ENCODE measurements at regions of chr12 and their contacts with region 1.

Region 1: DNA sequence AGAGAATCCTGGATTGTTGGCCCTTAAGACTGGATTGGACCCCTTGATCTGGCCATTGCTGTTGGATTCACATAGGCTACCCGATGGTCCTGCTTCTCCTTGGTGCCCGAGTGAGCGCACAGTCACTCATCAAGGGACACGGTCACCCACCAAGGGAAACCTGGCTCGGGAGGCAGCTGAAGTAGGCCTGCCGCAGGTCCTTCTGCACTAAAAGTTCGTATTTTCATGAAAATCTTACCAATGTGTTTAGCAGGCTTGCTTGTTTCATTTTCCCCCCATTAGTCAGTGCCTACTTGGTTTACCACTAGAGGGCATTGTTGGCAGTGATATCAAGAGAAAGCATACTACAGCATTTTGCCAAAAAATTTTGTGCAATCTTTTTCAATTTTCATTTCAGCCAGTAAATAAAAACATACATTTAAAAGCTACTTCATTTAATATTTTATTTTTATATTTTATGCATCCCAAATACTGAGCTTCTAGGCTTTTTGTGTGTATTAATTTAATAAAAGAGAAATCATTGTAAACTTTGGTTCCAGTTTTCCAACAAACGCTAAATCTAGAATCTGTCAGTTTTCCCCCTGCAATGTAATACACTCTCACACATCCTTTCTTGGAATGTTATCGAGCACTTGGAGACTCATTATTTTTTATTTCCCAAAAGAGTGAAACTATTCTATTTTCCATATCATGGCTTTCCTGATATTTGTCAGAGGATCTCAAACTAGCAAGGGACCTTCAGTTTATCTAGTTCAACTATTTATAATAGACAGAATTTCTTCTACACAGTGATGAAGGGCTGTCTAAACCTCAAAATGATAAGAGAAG is 116.7 kb downstream of the LMNTD1 start:
- DNase-seq: no peak
- ATAC-seq: no peak
- H3K4me3 Mint-ChIP-seq: no peak overlapping the region
- H3K27ac Mint-ChIP-seq: no peak overlapping the region
- H3K4me1 Mint-ChIP-seq: peaks cover 4% of the 10 kb centered on the region
- H3K27me3 Mint-ChIP-seq: no peaks in the 10 kb centered on the region
- CTCF ChIP-seq: peak; percentile 64

Region 2: DNA sequence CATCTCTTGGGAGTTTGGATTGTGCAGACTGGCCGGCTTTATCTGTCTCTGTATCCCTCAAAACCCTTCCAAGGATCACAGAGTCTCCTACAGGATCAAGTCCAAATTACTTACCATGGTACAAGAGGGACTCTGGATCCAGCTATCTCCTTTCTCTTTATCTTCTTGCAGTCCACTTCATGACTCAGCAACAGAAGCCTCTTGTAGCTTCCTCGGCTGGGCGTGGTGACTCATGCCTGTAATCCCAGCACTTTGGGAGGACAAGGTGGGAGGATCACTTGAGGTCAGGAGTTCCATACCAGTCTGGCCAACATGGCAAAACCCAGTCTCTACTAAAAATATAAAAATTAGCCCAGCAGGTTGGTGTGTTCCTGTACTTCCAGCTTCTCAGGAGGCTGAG is 677.3 kb before region 1 on chr12:
- CTCF ChIA-PET with region 1: no interaction called
- POLR2A ChIA-PET with region 1: no interaction called
- intact Hi-C with region 1: no loop called
- DNase-seq: no peak
- ATAC-seq: no peak
- H3K4me3 Mint-ChIP-seq: no peak overlapping the region
- H3K27ac Mint-ChIP-seq: no peak overlapping the region
- H3K4me1 Mint-ChIP-seq: peaks cover 5% of the 10 kb centered on the region
- H3K27me3 Mint-ChIP-seq: no peaks in the 10 kb centered on the region
- CTCF ChIP-seq: no peak

Region 3: GRCh38 chr12:25397001-25397400 is 39.4 kb before region 1 on chr12:
- CTCF ChIA-PET with region 1: no interaction called
- POLR2A ChIA-PET with region 1: no interaction called
- intact Hi-C with region 1: no loop called
- DNase-seq: no peak
- ATAC-seq: no peak
- H3K4me3 Mint-ChIP-seq: no peak overlapping the region
- H3K27ac Mint-ChIP-seq: no peak overlapping the region
- H3K4me1 Mint-ChIP-seq: peaks cover 5% of the 10 kb centered on the region
- H3K27me3 Mint-ChIP-seq: no peaks in the 10 kb centered on the region
- CTCF ChIP-seq: no peak

Region 4: GRCh38 chr12:25775968-25776367 is 339.6 kb after region 1 on chr12:
- CTCF ChIA-PET with region 1: no interaction called
- POLR2A ChIA-PET with region 1: no interaction called
- intact Hi-C with region 1: no loop called
- DNase-seq: no peak
- ATAC-seq: no peak
- H3K4me3 Mint-ChIP-seq: no peak overlapping the region
- H3K27ac Mint-ChIP-seq: no peak overlapping the region
- H3K4me1 Mint-ChIP-seq: no peaks in the 10 kb centered on the region
- H3K27me3 Mint-ChIP-seq: peaks cover 4% of the 10 kb centered on the region
- CTCF ChIP-seq: no peak

Region 5: DNA sequence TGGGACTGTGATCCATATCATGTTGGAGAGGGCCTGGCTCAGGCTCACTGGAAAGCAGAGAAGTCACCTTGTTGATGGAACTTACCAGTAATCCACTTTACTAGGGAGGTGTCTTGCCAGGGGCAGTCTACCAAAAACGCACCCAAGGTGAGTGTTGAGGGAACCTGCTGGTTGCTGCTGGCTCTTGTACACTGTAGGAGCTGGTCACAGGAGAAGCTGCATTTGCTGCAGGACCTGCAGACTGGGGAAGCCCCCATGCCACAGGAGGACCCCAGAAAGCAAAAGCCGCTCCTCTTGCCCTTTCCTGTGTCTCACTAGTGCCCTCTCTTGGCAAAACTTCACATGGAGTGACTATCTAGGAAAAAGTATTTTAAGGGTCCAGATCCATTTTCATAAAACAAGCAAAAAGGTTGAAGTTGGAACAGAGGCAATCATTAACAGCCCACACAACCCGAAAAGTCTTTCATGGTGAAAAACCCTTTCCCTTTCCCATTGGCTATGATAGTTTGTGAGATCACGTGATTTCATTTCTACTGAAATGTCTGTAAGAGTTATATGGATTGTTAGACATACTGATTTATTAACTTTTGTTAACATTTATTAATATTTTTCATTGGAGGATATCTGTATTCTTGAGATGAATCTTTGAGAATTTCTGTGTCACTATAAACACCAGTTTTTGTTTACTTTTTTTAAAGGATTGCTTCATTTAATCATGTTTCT is 581.2 kb after region 1 on chr12:
- CTCF ChIA-PET with region 1: interaction called, 10 read pairs
- POLR2A ChIA-PET with region 1: no interaction called
- intact Hi-C with region 1: loop called (anchors 1 kb)
- DNase-seq: no peak
- ATAC-seq: no peak
- H3K4me3 Mint-ChIP-seq: no peak overlapping the region
- H3K27ac Mint-ChIP-seq: no peak overlapping the region
- H3K4me1 Mint-ChIP-seq: no peaks in the 10 kb centered on the region
- H3K27me3 Mint-ChIP-seq: peaks cover 17% of the 10 kb centered on the region
- CTCF ChIP-seq: no peak

Region 6: GRCh38 chr12:26097046-26097878 is 660.8 kb after region 1 on chr12:
- CTCF ChIA-PET with region 1: no interaction called
- POLR2A ChIA-PET with region 1: interaction called, 3 read pairs
- intact Hi-C with region 1: loop called (anchors 1 kb)
- DNase-seq: peak; percentile 39
- ATAC-seq: peak; percentile 100
- H3K4me3 Mint-ChIP-seq: no peak overlapping the region
- H3K27ac Mint-ChIP-seq: no peak overlapping the region
- H3K4me1 Mint-ChIP-seq: peaks cover 5% of the 10 kb centered on the region
- H3K27me3 Mint-ChIP-seq: no peaks in the 10 kb centered on the region
- CTCF ChIP-seq: peak; percentile 88

Region 7: GRCh38 chr12:26614020-26614616 is 1177.7 kb after region 1 on chr12:
- CTCF ChIA-PET with region 1: no interaction called
- POLR2A ChIA-PET with region 1: no interaction called
- intact Hi-C with region 1: loop called (anchors 5 kb)
- DNase-seq: no peak
- ATAC-seq: peak; percentile 45
- H3K4me3 Mint-ChIP-seq: no peak overlapping the region
- H3K27ac Mint-ChIP-seq: no peak overlapping the region
- H3K4me1 Mint-ChIP-seq: no peaks in the 10 kb centered on the region
- H3K27me3 Mint-ChIP-seq: no peaks in the 10 kb centered on the region
- CTCF ChIP-seq: no peak

Region 8: GRCh38 chr12:26701604-26702215 is 1265.3 kb after region 1 on chr12:
- CTCF ChIA-PET with region 1: interaction called, 7 read pairs
- POLR2A ChIA-PET with region 1: no interaction called
- intact Hi-C with region 1: loop called (anchors 1 kb)
- DNase-seq: no peak
- ATAC-seq: no peak
- H3K4me3 Mint-ChIP-seq: no peak overlapping the region
- H3K27ac Mint-ChIP-seq: no peak overlapping the region
- H3K4me1 Mint-ChIP-seq: peaks cover 4% of the 10 kb centered on the region
- H3K27me3 Mint-ChIP-seq: no peaks in the 10 kb centered on the region
- CTCF ChIP-seq: peak; percentile 58

Measured in activated B cell treated with CpG ODN at 0.5 μM for 24 hours (primary cell).